AG04450 (cell line): ENCODE measurements at regions of chr5 and their contacts with region 1.

Region 1: DNA sequence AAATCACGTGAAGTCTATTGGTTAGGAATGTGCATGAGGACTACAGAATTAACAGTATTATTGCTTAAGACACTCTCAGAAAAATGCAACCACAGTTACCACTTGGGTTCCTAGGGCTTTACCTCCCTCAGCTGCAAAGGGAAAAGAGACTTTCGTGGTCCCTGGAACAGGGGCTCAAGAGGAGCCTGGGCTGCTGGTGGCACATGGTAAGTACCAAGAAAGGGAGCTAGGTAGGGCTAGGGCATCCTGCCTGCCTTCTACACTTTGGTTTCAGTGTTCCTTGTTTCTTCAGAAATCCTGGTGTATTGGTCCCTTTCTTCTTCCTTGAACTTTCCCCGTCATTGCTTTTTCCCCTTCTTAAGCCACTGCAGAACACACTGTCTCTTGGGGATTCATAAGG is 7.3 kb upstream of the VCAN start:
- DNase-seq: no peak
- H3K4me3 ChIP-seq: no peak overlapping the region
- H3K27ac ChIP-seq: no peak overlapping the region
- H3K27me3 ChIP-seq: peaks cover 5% of the 10 kb centered on the region
- CTCF ChIP-seq: no peak

Region 2: DNA sequence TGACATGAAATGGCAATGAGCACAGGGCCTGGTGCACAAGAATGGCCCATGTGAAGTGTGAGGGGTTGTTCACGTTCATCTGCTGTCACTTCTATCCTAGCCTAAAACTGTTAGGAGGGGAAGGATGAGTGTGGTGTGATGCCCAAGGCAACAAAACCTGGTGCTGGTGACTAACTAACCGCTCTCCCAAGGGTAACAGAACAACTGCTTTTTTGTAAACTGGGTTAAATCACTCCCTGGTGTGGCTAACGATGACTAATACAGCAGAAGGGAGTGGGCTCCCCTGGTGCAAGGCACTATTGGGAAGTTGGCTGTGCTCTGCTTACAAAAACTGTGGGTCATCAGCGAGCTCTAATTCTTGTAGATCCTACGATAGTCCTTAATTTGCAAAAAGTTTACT is 95.9 kb before region 1 on chr5:
- CTCF ChIA-PET with region 1: no interaction called
- POLR2A ChIA-PET with region 1: no interaction called
- DNase-seq: peak; percentile 36
- H3K4me3 ChIP-seq: no peak overlapping the region
- H3K27ac ChIP-seq: no peak overlapping the region
- H3K27me3 ChIP-seq: no peaks in the 10 kb centered on the region
- CTCF ChIP-seq: no peak

Region 3: GRCh38 chr5:83553000-83553486 is 88.8 kb after region 1 on chr5:
- CTCF ChIA-PET with region 1: interaction called, 10 read pairs
- POLR2A ChIA-PET with region 1: no interaction called
- DNase-seq: no peak
- H3K4me3 ChIP-seq: no peak overlapping the region
- H3K27ac ChIP-seq: no peak overlapping the region
- H3K27me3 ChIP-seq: no peaks in the 10 kb centered on the region
- CTCF ChIP-seq: no peak